ENCODE measurements at regions of chr12 and their contacts with region 1.

Region 1: GRCh38 chr12:62983599-62984022 is 48.7 kb upstream of the PPM1H start:
- DNase-seq: peak; percentile 59

Region 2: DNA sequence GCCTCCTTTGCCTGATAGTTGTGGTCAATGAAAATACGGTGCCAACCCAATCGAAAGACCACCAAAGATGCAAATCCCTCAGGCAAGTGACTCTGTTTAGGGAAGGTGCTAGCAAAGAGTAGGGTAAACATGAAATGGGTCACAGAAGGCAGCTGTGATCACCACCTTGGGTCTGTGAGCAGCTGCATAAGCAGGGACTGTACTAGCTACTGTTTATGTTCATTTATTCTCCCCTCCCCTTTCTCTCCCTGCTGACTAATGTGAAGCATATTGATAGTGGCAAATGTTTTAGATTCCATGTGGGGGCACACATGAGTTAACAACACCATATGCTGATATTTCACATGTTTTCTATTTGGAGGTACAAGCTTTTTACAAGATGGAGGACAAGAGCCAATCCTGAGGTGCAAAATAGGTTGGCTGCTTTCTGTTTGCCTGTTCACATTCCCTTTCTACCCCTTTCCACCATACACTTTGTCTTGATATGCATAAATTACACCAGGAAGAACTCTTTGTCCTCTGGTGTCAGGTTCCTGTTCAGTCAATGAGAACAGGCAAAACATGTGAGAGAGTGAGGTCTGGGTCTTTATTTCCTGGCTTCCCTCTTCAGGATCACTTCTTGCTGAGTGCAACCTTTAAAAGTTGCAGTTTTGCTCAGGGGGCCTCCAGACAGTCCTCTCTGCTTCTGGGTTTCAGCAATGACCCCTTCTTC is 96.3 kb after region 1 on chr12:
- in situ Hi-C with region 1: no loop called
- DNase-seq: peak; percentile 11

Region 3: DNA sequence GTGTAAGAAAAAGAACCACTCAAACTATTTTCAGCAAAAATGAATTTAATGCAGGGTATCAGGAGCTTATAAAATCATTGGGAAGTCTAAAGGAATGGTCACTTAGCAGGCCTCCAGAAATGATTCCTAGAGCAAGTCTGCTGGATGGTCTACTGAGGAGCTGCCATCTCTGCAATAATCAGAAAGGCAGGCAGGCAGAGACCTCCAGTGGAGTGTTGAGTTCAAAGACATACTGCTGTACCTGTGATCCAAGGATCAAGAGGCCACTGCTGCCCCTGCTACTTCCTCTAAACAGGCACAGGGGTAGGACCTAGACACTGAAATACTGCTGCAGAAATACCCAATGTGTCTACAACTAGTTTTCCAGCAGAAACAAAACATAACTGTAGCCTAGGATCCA is 1252.9 kb after region 1 on chr12:
- in situ Hi-C with region 1: loop called (anchors 25 kb)
- DNase-seq: no peak

Measured in KBM-7 (cell line).